ENCODE measurements at regions of chr14 and their contacts with region 1.

Region 1: DNA sequence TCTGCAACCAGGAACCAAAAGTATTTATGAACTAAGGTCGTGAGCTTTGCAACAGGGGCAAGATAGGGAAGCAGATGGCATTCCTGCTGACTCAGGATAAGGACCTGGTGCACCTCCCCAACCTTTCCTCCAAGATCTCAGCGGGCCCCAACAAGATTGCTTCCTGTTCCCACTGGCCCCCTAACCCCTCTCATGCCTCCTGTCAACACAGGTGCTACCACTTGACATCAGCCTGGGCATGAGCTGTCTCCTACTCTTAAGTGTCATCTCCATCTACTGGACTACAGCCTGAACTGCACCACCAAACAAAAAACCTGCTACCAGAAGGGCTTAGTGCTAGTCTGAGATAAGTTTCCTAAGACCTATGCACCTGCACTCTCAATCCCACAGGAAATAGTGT is 32.7 kb downstream of the MED6 start:
- DNase-seq: no peak
- H3K4me3 ChIP-seq: no peak overlapping the region
- H3K27ac ChIP-seq: no peak overlapping the region
- H3K4me1 ChIP-seq: no peaks in the 10 kb centered on the region
- H3K27me3 ChIP-seq: no peaks in the 10 kb centered on the region
- CTCF ChIP-seq: peak in 4 of 5 experiments; percentile 35 to 52 (median 40)
- EP300 ChIP-seq: no peak
- POLR2A ChIP-seq: no peak

Region 2: GRCh38 chr14:70339044-70339443 is 228.7 kb before region 1 on chr14:
- in situ Hi-C with region 1: loop called in 1 of 4 experiments (anchors 25 kb)
- intact Hi-C with region 1: no loop called
- DNase-seq: no peak
- H3K4me3 ChIP-seq: no peak overlapping the region
- H3K27ac ChIP-seq: no peak overlapping the region
- H3K4me1 ChIP-seq: no peaks in the 10 kb centered on the region
- H3K27me3 ChIP-seq: no peaks in the 10 kb centered on the region
- CTCF ChIP-seq: no peak
- EP300 ChIP-seq: no peak
- POLR2A ChIP-seq: no peak

Region 3: DNA sequence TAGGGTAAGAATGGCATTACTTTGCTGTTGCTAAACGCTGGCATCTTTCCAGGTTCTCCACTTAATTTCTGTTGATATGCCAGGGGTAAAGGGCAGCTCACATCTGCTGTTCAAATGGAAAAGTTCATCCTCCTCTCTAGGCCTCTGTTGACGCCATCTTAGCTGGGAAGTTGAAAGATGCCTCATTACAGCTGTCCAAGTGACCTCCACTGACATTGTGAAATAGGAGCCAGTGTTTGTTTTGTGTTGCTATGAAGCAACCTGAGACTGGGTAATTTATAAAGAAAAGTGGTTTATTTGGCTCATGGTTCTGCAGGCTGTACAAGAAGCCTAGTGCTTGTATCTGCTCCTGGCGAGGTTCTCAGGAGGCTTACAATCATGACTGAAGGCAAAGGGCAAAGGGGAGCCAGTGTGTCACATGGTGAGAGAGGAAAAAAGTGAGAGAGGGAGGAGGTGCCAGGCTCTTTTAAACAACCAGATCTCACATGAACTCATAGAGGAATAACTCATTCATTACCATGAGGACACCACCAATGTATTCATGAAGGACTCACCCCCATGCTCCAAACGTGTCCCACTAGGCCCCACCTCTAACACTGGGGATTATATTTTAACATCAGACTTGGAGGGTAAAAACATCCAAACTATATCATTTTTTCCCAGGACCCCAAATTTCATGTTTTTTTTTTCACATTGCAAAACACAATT is 119.0 kb before region 1 on chr14:
- in situ Hi-C with region 1: no loop called
- intact Hi-C with region 1: no loop called
- DNase-seq: no peak
- H3K4me3 ChIP-seq: no peak overlapping the region
- H3K27ac ChIP-seq: no peak overlapping the region
- H3K4me1 ChIP-seq: no peaks in the 10 kb centered on the region
- H3K27me3 ChIP-seq: no peaks in the 10 kb centered on the region
- CTCF ChIP-seq: no peak
- EP300 ChIP-seq: no peak
- POLR2A ChIP-seq: no peak

Region 4: DNA sequence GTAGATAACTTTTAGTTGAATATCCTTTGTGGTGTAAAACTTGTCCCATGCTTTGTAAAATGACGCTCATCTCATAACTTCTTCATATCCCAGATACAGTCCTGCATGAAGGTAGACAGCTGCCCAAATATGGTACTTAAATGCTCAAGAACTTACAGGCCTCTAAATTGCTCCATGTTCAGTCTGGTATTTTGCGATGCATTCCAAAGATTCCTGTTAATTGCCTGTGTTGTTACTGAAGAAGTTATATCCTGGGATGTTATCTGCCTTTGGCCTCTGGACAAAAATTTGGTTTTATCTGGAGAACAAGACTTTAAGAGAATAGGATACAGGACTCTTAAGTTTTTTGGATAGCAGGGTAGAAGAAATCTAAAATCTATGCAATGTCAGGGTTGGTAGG is 812.5 kb after region 1 on chr14:
- in situ Hi-C with region 1: no loop called
- intact Hi-C with region 1: loop called (anchors 10 kb)
- DNase-seq: no peak
- H3K4me3 ChIP-seq: no peak overlapping the region
- H3K27ac ChIP-seq: no peak overlapping the region
- H3K4me1 ChIP-seq: peaks cover 0 to 24% (median 2%) of the 10 kb centered on the region in 4 donors
- H3K27me3 ChIP-seq: no peaks in the 10 kb centered on the region
- CTCF ChIP-seq: no peak
- EP300 ChIP-seq: no peak
- POLR2A ChIP-seq: no peak